ENCODE measurements at regions of chr11 and their contacts with region 1.

Region 1: DNA sequence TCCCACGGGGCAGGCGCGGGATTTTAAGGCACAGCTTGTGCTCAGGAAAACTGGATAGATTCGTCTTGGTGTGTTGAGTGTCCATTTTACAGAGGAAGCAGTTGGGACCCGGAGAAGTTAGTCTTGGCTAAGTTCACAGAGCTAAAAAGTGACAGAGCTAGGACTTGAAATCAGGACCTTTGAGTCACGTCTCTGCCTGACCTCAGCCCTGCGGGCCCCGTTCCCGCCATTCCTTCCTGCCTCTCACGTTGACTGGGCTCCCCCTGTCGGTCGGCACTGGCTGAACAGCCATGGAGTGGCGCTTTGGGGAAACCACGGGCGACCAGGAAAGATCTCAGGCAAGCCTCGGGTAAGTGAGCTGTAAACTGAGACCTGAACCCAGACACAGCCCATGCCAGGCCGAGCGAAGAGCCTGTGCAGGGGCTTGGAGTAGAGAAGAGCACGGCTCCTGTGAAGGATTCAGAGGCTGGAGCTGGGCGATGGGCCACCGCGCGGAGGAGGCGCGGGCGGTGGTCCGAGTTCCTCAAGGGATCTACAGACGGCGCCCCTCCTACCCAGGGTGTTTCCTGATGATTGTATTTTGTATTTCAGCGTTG is 54.1 kb downstream of the WNT11 start:
- DNase-seq: peak; percentile 91
- H3K4me3 Mint-ChIP-seq: peak overlapping the region; percentile 63
- H3K27ac Mint-ChIP-seq: peak overlapping the region; percentile 45
- H3K4me1 Mint-ChIP-seq: peaks cover 35% of the 10 kb centered on the region
- H3K27me3 Mint-ChIP-seq: peaks cover 29% of the 10 kb centered on the region
- CTCF ChIP-seq: peak; percentile 95

Region 2: GRCh38 chr11:75547580-75548058 is 604.6 kb before region 1 on chr11:
- CTCF ChIA-PET with region 1: interaction called, 10 read pairs
- intact Hi-C with region 1: no loop called
- DNase-seq: peak; percentile 68
- H3K4me3 Mint-ChIP-seq: no peak overlapping the region
- H3K27ac Mint-ChIP-seq: no peak overlapping the region
- H3K4me1 Mint-ChIP-seq: no peaks in the 10 kb centered on the region
- H3K27me3 Mint-ChIP-seq: peaks cover 35% of the 10 kb centered on the region
- CTCF ChIP-seq: peak; percentile 84

Region 3: GRCh38 chr11:75896843-75897419 is 255.3 kb before region 1 on chr11:
- CTCF ChIA-PET with region 1: interaction called, 22 read pairs
- intact Hi-C with region 1: loop called (anchors 2 kb)
- DNase-seq: no peak
- H3K4me3 Mint-ChIP-seq: no peak overlapping the region
- H3K27ac Mint-ChIP-seq: no peak overlapping the region
- H3K4me1 Mint-ChIP-seq: no peaks in the 10 kb centered on the region
- H3K27me3 Mint-ChIP-seq: no peaks in the 10 kb centered on the region
- CTCF ChIP-seq: peak; percentile 56

Region 4: DNA sequence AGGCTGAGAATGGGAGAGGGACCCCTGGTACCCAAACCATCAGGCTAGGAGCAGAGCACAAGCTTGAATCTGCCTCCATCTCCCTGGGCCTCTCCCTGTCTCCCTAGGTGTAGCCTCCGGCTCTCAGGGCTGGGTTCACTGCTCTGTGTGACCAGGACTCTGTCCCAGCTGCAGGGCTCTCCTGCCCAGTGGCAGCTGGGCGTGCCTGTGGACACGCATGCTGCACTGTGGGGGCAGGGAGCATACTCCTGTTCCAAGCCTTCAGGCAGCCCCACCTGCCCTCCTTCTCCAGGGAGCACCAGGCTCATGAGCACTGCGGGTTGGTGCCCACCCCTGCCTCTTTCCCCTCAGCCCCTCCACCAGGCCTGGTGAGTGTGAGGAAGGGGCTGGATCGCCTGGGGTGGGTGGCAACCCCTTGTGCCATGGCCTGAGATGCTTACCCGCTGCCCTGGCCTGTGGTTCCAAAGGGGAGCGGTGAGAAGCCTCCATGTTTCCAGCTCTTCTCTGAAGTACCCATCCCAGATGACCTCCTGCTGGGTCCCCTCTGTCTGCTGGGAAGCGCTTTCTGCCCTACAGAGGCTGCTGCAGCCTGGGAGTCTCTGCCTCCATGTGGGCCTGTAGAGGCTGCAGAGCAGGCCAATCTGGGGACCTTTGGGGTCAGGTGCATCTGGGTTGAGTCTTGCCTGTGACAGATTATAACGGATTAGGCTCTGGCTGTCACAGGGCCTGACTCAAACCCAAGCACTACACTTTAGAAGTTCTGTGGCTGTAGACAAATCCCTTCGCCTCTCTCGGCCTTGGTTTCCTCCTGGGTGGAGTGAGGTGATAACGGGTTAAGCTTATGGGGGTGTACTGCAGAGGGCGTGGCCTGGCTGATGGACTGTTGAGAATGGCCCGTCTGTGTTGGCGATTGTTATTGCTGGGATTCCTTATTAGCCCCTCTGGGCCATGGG is 10.4 kb after region 1 on chr11:
- CTCF ChIA-PET with region 1: no interaction called
- intact Hi-C with region 1: no loop called
- DNase-seq: no peak
- H3K4me3 Mint-ChIP-seq: no peak overlapping the region
- H3K27ac Mint-ChIP-seq: no peak overlapping the region
- H3K4me1 Mint-ChIP-seq: no peaks in the 10 kb centered on the region
- H3K27me3 Mint-ChIP-seq: peaks cover 71% of the 10 kb centered on the region
- CTCF ChIP-seq: no peak